Naive thymus-derived CD4-positive, alpha-beta T cell (primary cell): ENCODE measurements at regions of chrX and their contacts with region 1.

Region 1: GRCh38 chrX:50988649-50989048 is 78.1 kb downstream of the BMP15 start:
- DNase-seq: peak in 1 of 9 donors; percentile 5
- ATAC-seq: no peak
- H3K4me3 ChIP-seq: no peak overlapping the region
- H3K4me3 Mint-ChIP-seq: no peak overlapping the region
- H3K27ac ChIP-seq: no peak overlapping the region
- H3K27ac Mint-ChIP-seq: no peak overlapping the region
- H3K4me1 ChIP-seq: no peaks in the 10 kb centered on the region
- H3K4me1 Mint-ChIP-seq: no peaks in the 10 kb centered on the region
- H3K27me3 ChIP-seq: no peaks in the 10 kb centered on the region
- H3K27me3 Mint-ChIP-seq: peaks cover 0 to 14% (median 0%) of the 10 kb centered on the region in 5 donors

Region 2: GRCh38 chrX:50691820-50692219 is 296.8 kb before region 1 on chrX:
- CTCF ChIA-PET with region 1: no interaction called
- POLR2A ChIA-PET with region 1: no interaction called
- intact Hi-C with region 1: loop called in 1 of 2 experiments (anchors 2 kb)
- DNase-seq: peak in 7 of 9 donors; percentile 8 to 48 (median 29)
- ATAC-seq: peak; percentile 65
- H3K4me3 ChIP-seq: no peak overlapping the region
- H3K4me3 Mint-ChIP-seq: no peak overlapping the region
- H3K27ac ChIP-seq: no peak overlapping the region
- H3K27ac Mint-ChIP-seq: no peak overlapping the region
- H3K4me1 ChIP-seq: no peaks in the 10 kb centered on the region
- H3K4me1 Mint-ChIP-seq: no peaks in the 10 kb centered on the region
- H3K27me3 ChIP-seq: no peaks in the 10 kb centered on the region
- H3K27me3 Mint-ChIP-seq: peaks cover 0 to 12% (median 10%) of the 10 kb centered on the region in 5 donors

Region 3: DNA sequence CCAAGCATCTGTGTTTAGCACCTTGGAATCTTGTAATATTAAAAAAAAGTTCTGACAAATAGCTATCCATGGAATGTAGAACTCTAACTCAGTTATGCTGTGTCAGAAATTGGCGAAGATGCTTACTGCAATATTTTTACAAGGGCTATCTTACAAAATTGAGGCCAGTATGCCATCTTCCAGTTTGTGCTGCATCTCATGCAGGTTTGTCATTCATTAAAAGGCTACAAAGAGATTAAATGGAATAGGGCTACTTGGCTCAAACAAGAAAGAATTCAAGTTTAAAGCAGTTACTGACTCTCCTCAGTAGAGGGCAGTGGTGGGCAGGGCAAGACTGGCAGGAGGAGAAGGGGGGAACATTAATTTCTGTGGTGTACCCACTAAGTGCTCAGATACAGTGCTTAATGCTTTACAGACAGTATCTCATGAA is 241.2 kb before region 1 on chrX:
- CTCF ChIA-PET with region 1: no interaction called
- POLR2A ChIA-PET with region 1: no interaction called
- intact Hi-C with region 1: loop called in 1 of 2 experiments (anchors 5 kb)
- DNase-seq: peak in 2 of 9 donors; percentile 0 to 3
- ATAC-seq: no peak
- H3K4me3 ChIP-seq: no peak overlapping the region
- H3K4me3 Mint-ChIP-seq: no peak overlapping the region
- H3K27ac ChIP-seq: no peak overlapping the region
- H3K27ac Mint-ChIP-seq: no peak overlapping the region
- H3K4me1 ChIP-seq: no peaks in the 10 kb centered on the region
- H3K4me1 Mint-ChIP-seq: no peaks in the 10 kb centered on the region
- H3K27me3 ChIP-seq: no peaks in the 10 kb centered on the region
- H3K27me3 Mint-ChIP-seq: peaks cover 3 to 18% (median 12%) of the 10 kb centered on the region in 5 donors

Region 4: DNA sequence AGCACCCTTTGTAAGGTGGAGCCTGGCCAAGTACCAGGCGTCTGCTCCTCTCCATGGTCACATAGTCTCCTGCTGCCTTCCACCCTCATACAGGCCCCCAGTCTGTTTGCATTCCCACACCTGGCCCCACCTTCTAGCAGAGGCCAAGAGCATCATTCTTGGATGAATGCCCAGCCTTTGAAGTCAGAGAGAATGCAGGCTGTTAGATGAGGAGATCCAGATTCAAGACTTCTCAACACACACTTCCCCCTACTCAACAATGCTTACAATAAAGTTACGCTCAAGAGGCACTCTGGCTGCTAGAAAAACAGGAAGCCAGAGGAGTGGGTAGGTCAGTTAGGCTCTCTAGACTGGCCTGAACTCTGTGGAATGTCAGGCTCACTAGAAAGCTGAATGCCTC is 217.9 kb before region 1 on chrX:
- CTCF ChIA-PET with region 1: no interaction called
- POLR2A ChIA-PET with region 1: no interaction called
- intact Hi-C with region 1: no loop called
- DNase-seq: no peak
- ATAC-seq: no peak
- H3K4me3 ChIP-seq: no peak overlapping the region
- H3K4me3 Mint-ChIP-seq: no peak overlapping the region
- H3K27ac ChIP-seq: no peak overlapping the region
- H3K27ac Mint-ChIP-seq: no peak overlapping the region
- H3K4me1 ChIP-seq: no peaks in the 10 kb centered on the region
- H3K4me1 Mint-ChIP-seq: no peaks in the 10 kb centered on the region
- H3K27me3 ChIP-seq: no peaks in the 10 kb centered on the region
- H3K27me3 Mint-ChIP-seq: peaks cover 0 to 9% (median 4%) of the 10 kb centered on the region in 5 donors

Region 5: DNA sequence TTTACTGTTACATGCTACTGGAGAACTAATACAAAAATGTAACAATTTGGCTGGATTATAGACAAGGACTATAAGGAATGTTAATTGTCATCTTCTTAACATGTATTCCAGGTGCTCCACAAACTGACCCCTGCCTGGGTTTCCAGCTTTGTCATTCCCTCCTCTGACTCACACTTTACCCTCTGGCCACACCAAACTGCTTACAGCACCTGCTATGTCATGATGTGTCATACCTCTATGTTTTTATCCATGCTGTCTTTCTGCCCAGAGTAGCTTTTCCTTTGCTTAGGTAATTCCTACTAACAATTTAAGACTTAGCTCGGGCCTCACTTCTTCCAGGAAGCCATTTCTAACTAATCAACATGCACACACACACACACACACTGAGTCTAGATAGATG is 160.7 kb before region 1 on chrX:
- CTCF ChIA-PET with region 1: no interaction called
- POLR2A ChIA-PET with region 1: no interaction called
- intact Hi-C with region 1: no loop called
- DNase-seq: no peak
- ATAC-seq: no peak
- H3K4me3 ChIP-seq: no peak overlapping the region
- H3K4me3 Mint-ChIP-seq: no peak overlapping the region
- H3K27ac ChIP-seq: no peak overlapping the region
- H3K27ac Mint-ChIP-seq: no peak overlapping the region
- H3K4me1 ChIP-seq: no peaks in the 10 kb centered on the region
- H3K4me1 Mint-ChIP-seq: no peaks in the 10 kb centered on the region
- H3K27me3 ChIP-seq: no peaks in the 10 kb centered on the region
- H3K27me3 Mint-ChIP-seq: peaks cover 0 to 2% (median 0%) of the 10 kb centered on the region in 5 donors

Region 6: DNA sequence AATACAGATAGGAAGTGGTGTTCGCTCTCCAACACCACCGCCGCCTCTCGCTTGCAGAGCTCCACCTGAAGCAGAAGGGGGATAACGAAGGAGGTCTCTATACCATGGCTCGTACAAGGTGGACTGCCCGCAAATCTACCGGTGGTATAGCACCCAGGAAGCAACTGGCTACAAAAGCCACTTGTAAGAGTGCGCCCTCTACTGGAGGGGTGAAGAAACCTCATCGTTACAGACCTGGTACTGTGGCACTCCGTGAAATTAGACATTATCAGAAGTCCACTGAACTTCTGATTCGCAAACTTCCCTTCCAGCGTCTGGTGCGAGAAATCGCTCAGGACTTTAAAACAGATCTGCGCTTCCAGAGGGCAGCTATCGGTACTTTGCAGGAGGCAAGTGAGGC is 83.3 kb before region 1 on chrX:
- CTCF ChIA-PET with region 1: no interaction called
- POLR2A ChIA-PET with region 1: no interaction called
- intact Hi-C with region 1: no loop called
- DNase-seq: no peak
- ATAC-seq: no peak
- H3K4me3 ChIP-seq: no peak overlapping the region
- H3K4me3 Mint-ChIP-seq: no peak overlapping the region
- H3K27ac ChIP-seq: no peak overlapping the region
- H3K27ac Mint-ChIP-seq: no peak overlapping the region
- H3K4me1 ChIP-seq: no peaks in the 10 kb centered on the region
- H3K4me1 Mint-ChIP-seq: no peaks in the 10 kb centered on the region
- H3K27me3 ChIP-seq: no peaks in the 10 kb centered on the region
- H3K27me3 Mint-ChIP-seq: peaks cover 0 to 4% (median 0%) of the 10 kb centered on the region in 5 donors